H1 (cell line): ENCODE measurements at regions of chr15 and their contacts with region 1.

Region 1: DNA sequence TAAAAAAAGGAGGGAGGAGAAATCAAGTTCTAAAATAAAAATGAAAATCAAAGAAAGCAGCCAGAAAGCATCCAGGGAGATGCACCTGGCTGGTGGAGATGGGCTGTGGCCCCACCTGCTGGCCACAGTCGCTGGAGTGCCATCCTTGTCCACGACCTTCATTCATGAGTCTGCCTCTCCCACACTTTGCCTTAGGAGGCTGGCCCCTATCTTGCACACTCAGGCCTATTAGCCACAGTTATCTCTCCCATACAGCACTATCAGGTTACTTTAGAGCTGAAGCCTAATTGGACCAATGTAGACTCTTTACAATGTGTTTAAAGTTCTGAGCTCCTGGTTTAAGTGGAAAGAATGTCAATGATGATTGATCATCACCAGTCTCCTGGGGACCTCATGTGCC is 392.0 kb upstream of the RORA start:
- DNase-seq: peak in 1 of 2 experiments; percentile 57
- H3K4me3 ChIP-seq: no peak overlapping the region
- H3K27ac ChIP-seq: no peak overlapping the region
- H3K4me1 ChIP-seq: no peaks in the 10 kb centered on the region; a peak in 1 of 7 replicates
- H3K27me3 ChIP-seq: no peaks in the 10 kb centered on the region; a peak in 2 of 7 replicates
- CTCF ChIP-seq: peak; percentile 77 to 91 (median 86)
- EP300 ChIP-seq: no peak
- POLR2A ChIP-seq: no peak
- RAD21 ChIP-seq: peak; percentile 92

Region 2: DNA sequence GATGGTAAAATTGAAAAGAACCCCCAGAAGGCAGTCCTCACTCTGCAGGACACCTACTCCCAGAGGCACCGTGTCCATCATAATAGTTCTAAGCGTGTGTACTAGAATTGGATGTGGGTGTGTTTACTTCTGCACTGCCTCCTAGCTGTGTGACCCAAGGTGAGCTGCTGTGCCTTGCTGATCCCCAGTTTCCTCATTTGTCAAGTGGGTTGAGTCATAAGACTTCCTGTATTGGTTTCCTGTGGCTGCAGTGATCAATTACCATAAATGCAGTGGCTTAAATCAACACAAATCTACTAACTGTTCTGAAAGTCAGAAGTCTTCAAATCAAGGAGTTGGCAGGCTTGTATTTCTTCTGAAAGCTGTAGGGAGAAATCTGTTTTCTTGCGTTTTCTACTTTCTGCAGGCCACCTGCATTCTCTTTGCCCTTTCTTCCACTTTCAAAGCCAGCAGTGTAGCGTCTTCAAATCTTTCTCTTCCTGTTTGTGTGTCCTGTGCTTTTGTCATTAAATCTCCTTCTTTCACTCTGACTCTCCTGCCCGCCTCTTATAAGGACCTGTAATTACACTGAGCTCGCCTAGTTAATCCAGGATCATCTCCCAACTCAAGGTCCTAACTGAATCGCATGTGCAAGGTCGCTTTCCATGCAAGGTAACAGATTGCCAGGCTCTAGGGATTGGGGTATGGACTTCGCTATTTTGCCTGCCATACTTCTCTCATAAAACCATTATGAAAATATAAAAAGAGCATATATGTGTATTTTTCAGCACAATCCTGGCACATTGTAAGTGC is 451.0 kb before region 1 on chr15:
- CTCF ChIA-PET with region 1: interaction called, 51 read pairs
- POLR2A ChIA-PET with region 1: no interaction called
- DNase-seq: no peak
- H3K4me3 ChIP-seq: no peak overlapping the region
- H3K27ac ChIP-seq: no peak overlapping the region
- H3K4me1 ChIP-seq: peaks cover 10 to 34% (median 29%) of the 10 kb centered on the region in 4 experiments
- H3K27me3 ChIP-seq: no peaks in the 10 kb centered on the region
- CTCF ChIP-seq: no peak
- EP300 ChIP-seq: no peak
- POLR2A ChIP-seq: no peak
- RAD21 ChIP-seq: no peak

Region 3: DNA sequence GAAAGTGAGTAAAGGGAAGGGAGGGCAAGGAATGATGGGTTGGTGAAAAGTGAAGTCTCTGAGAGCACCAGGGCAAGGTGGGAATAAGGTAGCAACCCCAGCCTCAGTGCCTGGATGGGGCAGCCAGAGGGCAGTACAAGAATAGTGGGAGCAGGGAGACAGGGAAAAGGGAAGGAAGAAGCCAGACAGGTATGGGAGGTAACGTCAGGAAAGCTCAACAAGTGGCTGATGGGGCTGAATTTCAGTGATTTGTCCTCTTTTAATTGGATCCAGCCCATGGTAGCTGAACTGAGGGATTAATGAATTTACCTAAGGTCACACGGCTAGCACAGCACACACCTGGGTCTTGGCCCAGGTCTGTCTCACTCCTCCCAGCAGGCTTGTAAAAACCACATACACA is 404.6 kb before region 1 on chr15:
- CTCF ChIA-PET with region 1: interaction called, 44 read pairs
- POLR2A ChIA-PET with region 1: no interaction called
- DNase-seq: peak in 1 of 2 experiments; percentile 57
- H3K4me3 ChIP-seq: no peak overlapping the region
- H3K27ac ChIP-seq: no peak overlapping the region
- H3K4me1 ChIP-seq: peaks cover 0 to 9% (median 7%) of the 10 kb centered on the region in 4 experiments; a peak in 4 of 7 replicates
- H3K27me3 ChIP-seq: no peaks in the 10 kb centered on the region
- CTCF ChIP-seq: peak; percentile 62 to 85 (median 84)
- EP300 ChIP-seq: no peak
- POLR2A ChIP-seq: no peak
- RAD21 ChIP-seq: peak; percentile 86

Region 4: DNA sequence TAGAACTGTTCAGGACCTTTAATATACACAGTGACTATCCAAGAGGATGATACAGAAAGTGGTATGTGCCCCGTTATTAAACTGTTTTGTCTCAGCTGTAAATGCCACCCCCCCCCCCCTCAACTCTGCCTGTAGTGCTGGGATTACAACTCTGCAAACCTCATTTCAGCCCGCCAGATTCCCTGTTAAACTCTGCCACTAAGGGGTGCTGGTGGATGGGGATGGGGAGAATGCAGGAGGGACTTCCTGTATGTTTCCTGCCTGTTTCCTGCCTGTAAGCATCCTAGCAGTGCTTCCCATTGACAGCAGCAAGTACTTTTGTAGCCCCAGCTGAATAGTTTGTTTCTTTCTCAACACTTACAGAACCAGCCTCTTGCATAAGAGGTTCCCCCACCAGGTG is 90.4 kb before region 1 on chr15:
- CTCF ChIA-PET with region 1: interaction called, 41 read pairs
- POLR2A ChIA-PET with region 1: no interaction called
- DNase-seq: peak in 1 of 2 experiments; percentile 48
- H3K4me3 ChIP-seq: no peak overlapping the region
- H3K27ac ChIP-seq: no peak overlapping the region
- H3K4me1 ChIP-seq: peaks cover 6 to 9% (median 6%) of the 10 kb centered on the region in 4 experiments; a peak in 6 of 7 replicates
- H3K27me3 ChIP-seq: no peaks in the 10 kb centered on the region
- CTCF ChIP-seq: peak; percentile 49 to 69 (median 68)
- EP300 ChIP-seq: no peak
- POLR2A ChIP-seq: no peak
- RAD21 ChIP-seq: peak; percentile 76 to 85

Region 5: GRCh38 chr15:61605343-61605742 is 15.8 kb before region 1 on chr15:
- CTCF ChIA-PET with region 1: interaction called, 20 read pairs
- POLR2A ChIA-PET with region 1: no interaction called
- DNase-seq: no peak
- H3K4me3 ChIP-seq: no peak overlapping the region
- H3K27ac ChIP-seq: no peak overlapping the region
- H3K4me1 ChIP-seq: no peaks in the 10 kb centered on the region
- H3K27me3 ChIP-seq: no peaks in the 10 kb centered on the region
- CTCF ChIP-seq: no peak
- EP300 ChIP-seq: no peak
- POLR2A ChIP-seq: no peak
- RAD21 ChIP-seq: no peak

Region 6: DNA sequence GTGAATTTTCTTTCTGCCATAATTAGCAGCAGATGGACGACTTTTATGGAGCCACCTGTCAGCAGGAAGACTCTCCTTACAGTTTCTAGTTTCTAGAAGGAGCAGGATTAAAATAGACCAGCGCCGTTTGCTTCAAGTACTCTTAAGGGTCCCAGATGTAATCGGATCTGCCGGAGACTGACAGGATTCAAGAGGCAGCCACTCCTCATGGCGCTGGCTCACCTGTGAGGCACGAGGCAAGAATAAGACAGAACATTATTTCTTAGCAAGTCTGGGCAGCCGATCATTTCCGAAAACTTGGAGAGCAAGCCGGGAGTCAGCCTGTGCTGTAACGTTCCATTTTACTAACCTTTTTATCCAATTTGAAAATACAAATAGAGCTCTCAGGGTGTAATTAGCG is 18.3 kb after region 1 on chr15:
- CTCF ChIA-PET with region 1: interaction called, 15 read pairs
- POLR2A ChIA-PET with region 1: no interaction called
- DNase-seq: no peak
- H3K4me3 ChIP-seq: no peak overlapping the region
- H3K27ac ChIP-seq: no peak overlapping the region
- H3K4me1 ChIP-seq: peaks cover 0 to 12% (median 5%) of the 10 kb centered on the region in 4 experiments; a peak in 5 of 7 replicates
- H3K27me3 ChIP-seq: peaks cover 0 to 7% (median 2%) of the 10 kb centered on the region in 4 experiments; a peak in 3 of 7 replicates
- CTCF ChIP-seq: no peak
- EP300 ChIP-seq: no peak
- POLR2A ChIP-seq: no peak
- RAD21 ChIP-seq: no peak

Region 7: DNA sequence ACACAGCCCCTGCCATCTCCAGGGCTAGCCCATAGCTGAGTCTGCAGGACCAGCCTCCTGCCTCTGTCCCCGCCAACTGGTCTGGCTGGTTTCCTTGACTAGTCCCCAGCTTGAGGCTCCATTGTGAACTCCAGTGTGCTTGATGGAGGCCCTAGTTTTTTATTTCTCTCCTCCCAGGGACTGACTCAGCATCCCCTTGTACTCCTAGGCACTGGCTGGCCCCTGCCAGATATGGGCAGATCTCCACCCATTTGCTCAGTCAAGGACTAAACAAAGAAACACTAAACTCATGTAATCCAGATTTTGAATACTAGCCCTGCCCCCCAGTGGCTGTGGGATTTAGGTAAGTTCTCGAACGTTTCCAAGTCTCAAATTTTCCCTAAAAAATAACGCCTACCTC is 23.4 kb after region 1 on chr15:
- CTCF ChIA-PET with region 1: interaction called, 15 read pairs
- POLR2A ChIA-PET with region 1: no interaction called
- DNase-seq: no peak
- H3K4me3 ChIP-seq: no peak overlapping the region
- H3K27ac ChIP-seq: no peak overlapping the region
- H3K4me1 ChIP-seq: peaks cover 0 to 13% (median 5%) of the 10 kb centered on the region in 4 experiments; a peak in 5 of 7 replicates
- H3K27me3 ChIP-seq: peaks cover 0 to 7% (median 2%) of the 10 kb centered on the region in 4 experiments; a peak in 3 of 7 replicates
- CTCF ChIP-seq: no peak
- EP300 ChIP-seq: no peak
- POLR2A ChIP-seq: no peak
- RAD21 ChIP-seq: peak; percentile 15 to 31; a peak in 3 of 4 replicates

Region 8: DNA sequence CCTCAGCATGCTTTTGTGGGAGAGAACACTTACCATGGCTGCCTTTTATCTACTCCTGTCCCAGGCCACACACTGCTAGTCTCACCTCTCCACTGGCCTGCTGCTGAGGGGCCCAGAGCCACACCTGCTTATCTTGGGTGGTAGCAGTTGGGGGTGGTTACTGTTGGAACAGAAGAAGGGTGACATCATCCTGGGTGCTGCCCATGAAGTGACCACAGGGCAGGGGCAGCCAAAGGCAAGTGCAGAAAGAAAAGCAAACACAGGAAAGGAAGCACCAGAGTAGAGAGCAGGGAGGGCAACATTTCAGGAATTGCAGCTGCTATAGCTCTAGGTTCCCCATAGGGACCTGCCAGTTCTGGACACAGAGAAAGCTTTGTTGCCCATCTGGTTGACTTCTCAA is 93.9 kb after region 1 on chr15:
- CTCF ChIA-PET with region 1: no interaction called
- POLR2A ChIA-PET with region 1: no interaction called
- DNase-seq: no peak
- H3K4me3 ChIP-seq: no peak overlapping the region
- H3K27ac ChIP-seq: no peak overlapping the region
- H3K4me1 ChIP-seq: no peaks in the 10 kb centered on the region
- H3K27me3 ChIP-seq: peaks cover 0 to 5% (median 2%) of the 10 kb centered on the region in 4 experiments; a peak in 2 of 7 replicates
- CTCF ChIP-seq: no peak
- EP300 ChIP-seq: no peak
- POLR2A ChIP-seq: no peak
- RAD21 ChIP-seq: no peak